Activated T-helper 2 cell treated with anti-CD3 and anti-CD28 coated beads, Interferon-gamma antibody, Interleukin-2, Interleukin-4, amounts not matched to agents 10 μg/mL and 5 μg/mL and 100 μg/mL, durations not matched to agents 14 hours and 24 hours and 36 hours (primary cell): ENCODE measurements at regions of chr2 and their contacts with region 1.

Region 1: GRCh38 chr2:7825591-7826312 is 856.1 kb upstream of the ID2 start:
- DNase-seq: peak; percentile 46
- H3K4me3 Mint-ChIP-seq: peak overlapping the region; percentile 31
- H3K27ac Mint-ChIP-seq: peak overlapping the region; percentile 94
- H3K4me1 Mint-ChIP-seq: peaks cover 43% of the 10 kb centered on the region
- H3K27me3 Mint-ChIP-seq: no peaks in the 10 kb centered on the region

Region 2: DNA sequence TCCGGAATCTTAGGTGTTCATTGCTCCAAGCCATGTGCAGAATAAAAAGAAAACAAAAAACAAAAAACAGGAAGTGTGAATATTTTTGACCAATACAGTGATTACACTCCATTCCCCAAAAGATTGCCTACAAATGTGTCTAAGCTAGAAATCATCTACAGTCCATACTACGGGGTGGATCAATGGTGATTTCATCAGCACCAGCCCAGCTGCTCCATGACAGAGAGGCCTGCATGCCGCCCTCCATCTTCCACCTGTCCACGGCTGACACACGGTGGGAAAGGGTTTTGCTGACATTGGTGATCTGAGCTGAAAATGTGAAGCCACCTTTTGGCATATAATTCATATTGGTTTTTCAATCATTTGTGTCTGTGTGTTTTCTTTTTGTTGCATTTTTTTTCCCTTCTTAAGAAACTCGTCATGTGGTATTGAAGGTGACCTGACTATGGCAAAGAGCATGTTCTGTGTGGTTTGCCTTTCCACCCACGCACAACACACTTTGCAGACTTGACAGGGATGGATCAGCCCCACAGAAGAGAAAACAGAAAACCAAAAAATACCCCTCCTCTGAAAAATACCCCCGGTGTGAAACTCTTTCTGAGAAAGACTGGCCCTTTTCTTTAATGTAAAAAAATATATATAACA is 375.4 kb before region 1 on chr2:
- intact Hi-C with region 1: loop called (anchors 1 kb)
- DNase-seq: peak; percentile 59
- H3K4me3 Mint-ChIP-seq: peak overlapping the region; percentile 26
- H3K27ac Mint-ChIP-seq: peak overlapping the region; percentile 99
- H3K4me1 Mint-ChIP-seq: peaks cover 85% of the 10 kb centered on the region
- H3K27me3 Mint-ChIP-seq: no peaks in the 10 kb centered on the region

Region 3: DNA sequence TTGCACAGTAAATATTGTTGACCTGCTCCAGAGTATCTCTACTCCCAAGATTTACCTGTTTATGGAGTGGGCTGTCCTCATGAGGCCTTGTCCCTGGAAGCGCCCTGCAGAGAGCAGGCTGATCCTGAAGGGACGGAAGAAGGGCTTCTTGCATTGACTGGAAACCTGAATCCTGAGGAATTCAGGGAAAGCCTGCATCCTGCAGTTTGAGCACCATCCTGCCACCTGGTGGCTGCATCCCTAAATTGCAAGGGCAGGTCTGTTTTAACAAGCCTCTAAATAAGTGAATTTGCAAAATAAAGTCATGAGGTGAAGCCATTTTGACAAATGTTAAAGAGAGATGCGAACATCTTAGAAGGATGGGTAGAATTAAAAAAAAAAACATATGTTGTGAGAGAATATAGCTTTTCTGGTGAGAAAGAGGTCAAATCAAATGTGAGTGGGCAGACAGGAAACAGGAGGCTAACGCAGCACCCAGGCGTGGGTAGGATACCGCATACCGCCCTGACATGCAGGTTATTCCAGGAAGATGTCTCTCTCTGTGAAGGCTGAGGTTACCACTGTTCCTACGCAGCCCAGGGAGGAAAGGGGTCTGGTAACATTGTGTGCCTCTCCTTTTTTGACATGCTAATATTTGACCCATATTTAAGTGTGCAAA is 153.6 kb before region 1 on chr2:
- intact Hi-C with region 1: loop called (anchors 5 kb)
- DNase-seq: peak; percentile 51
- H3K4me3 Mint-ChIP-seq: peak overlapping the region; percentile 63
- H3K27ac Mint-ChIP-seq: peak overlapping the region; percentile 97
- H3K4me1 Mint-ChIP-seq: peaks cover 60% of the 10 kb centered on the region
- H3K27me3 Mint-ChIP-seq: no peaks in the 10 kb centered on the region

Region 4: GRCh38 chr2:7773362-7774360 is 52.1 kb before region 1 on chr2:
- intact Hi-C with region 1: loop called (anchors 1 kb)
- DNase-seq: peak; percentile 26
- H3K4me3 Mint-ChIP-seq: peak overlapping the region; percentile 31
- H3K27ac Mint-ChIP-seq: peak overlapping the region; percentile 91
- H3K4me1 Mint-ChIP-seq: peaks cover 58% of the 10 kb centered on the region
- H3K27me3 Mint-ChIP-seq: no peaks in the 10 kb centered on the region

Region 5: DNA sequence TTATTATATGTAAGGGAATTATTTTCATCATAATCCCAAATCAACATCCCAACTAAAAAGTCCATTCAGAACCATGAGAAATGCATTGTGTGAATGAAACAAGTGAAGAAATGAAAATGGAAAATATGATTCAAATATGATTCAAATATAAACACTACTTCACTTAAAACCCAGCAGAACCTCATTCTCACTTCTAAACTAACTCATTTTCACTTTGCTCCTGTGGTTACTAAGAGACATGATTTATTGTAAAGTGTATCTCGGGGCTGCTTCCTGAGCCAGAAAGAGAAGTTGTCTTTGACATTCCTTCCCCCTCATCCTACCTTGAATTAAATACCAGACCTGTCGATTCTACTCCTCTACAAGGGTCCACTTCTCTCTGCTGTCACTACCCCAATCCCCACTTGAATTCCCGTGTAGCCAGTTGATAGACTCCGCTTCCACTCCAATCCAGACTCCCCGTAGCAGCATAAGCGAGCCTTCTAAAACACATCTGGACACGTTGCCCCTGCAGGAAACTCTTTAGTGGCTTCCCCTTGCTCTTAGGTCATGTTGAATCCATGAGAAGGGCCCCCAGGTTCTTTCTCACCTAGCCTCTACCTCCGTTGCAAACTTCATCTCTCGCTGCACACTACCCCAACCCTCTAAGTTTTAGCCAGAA is 159.1 kb after region 1 on chr2:
- intact Hi-C with region 1: loop called (anchors 5 kb)
- DNase-seq: no peak
- H3K4me3 Mint-ChIP-seq: no peak overlapping the region
- H3K27ac Mint-ChIP-seq: peak overlapping the region; percentile 89
- H3K4me1 Mint-ChIP-seq: peaks cover 32% of the 10 kb centered on the region
- H3K27me3 Mint-ChIP-seq: no peaks in the 10 kb centered on the region

Region 6: DNA sequence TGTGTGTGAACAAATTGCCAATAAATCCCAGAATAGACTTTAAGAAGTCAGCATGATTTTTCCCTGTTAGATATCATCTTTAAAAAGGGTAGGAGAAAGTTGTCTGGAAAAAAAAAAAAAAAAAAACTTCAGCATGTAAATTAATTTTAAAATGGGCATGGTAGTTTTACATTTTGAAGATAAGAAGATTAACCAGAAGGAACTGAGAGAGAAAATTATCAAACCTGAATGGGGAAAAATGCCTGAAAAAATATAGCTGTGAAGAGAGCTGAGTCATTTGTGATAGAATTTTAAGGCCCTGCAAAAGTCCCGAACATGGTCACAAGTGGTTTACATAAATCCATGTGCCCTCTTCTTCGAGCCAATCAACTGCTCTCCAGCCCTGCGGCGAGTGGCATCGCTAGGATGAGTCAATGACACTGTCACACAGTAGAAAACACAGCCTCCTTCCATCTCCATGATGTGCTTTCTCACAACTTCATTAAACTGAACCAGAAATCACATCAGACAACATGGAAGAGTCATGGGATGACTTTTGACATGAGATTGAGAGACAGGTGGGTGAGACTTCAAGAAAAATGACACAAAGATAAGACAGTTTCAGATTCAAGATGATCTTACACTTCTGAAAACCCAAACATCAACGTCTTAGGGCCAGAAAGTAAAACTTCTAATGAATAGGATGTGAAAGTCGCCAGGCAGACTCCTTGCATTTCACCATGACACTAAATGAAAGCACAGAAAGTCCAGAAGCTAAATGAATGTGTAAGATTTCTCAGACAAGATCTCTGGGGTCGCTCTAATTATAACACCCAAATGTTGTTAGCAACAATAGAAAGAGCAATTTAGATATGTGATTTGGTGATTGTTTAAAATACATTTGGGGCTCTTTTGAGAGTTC is 583.1 kb after region 1 on chr2:
- intact Hi-C with region 1: loop called (anchors 1 kb)
- DNase-seq: peak; percentile 43
- H3K4me3 Mint-ChIP-seq: no peak overlapping the region
- H3K27ac Mint-ChIP-seq: peak overlapping the region; percentile 79
- H3K4me1 Mint-ChIP-seq: peaks cover 36% of the 10 kb centered on the region
- H3K27me3 Mint-ChIP-seq: peaks cover 24% of the 10 kb centered on the region